CD8-positive, alpha-beta T cell (primary cell): ENCODE measurements at regions of chr15 and their contacts with region 1.

Region 1: DNA sequence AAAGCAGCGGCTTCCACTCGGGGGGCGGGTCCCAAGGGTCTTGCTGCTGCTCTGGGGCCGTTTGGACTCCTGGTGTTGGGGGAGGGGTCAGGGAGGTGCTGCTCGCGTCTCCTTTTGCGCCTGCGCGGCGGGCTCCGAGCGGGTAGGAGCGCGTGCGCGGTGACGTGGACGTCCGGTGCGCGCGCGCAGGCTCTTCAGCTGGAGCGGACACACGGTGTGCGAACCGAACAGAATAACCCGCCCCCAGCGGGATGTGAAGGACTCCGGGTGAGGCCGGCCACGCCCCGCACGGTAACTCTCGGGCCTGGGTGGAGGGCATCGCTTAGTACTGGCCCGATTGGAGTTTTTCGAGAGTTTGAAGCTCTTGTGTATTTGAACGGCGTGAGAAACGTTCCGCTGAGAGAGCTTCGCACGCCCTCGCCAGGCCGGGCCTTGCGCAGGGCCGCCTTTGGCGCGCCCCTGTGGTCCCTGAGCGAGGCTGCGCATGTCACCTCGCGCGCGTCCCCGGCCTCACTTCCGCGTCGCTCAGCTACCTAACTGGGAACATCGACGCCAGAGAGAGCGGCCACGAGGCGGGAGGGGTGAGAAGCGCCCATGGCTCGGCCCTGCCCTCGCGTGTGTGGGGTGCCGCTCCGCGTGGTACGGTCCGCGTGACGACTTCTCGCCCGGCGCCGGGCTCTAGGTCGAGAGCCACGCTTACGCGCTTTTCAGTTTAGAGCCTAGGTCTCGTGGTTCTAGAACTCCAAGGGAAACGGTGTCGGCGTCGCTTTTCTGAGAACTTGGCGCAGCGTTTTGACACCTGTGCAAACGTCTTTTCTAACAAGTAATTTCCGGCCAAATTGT is at the start of gene MGA:
- DNase-seq: peak; percentile 74 to 95 (median 89)
- ATAC-seq: peak; percentile 79
- H3K4me3 ChIP-seq: peak within 1 kb of the TSS; percentile 56 to 62
- H3K4me3 Mint-ChIP-seq: peak within 1 kb of the TSS; percentile 86
- H3K27ac ChIP-seq: peak within 1 kb of the TSS; percentile 90 to 98
- H3K27ac Mint-ChIP-seq: peak within 1 kb of the TSS; percentile 89
- H3K4me1 ChIP-seq: peaks cover 31% of the 10 kb centered on the region
- H3K4me1 Mint-ChIP-seq: peaks cover 54% of the 10 kb centered on the region
- H3K27me3 ChIP-seq: peaks cover 0 to 3% of the 10 kb centered on the region in 2 experiments
- H3K27me3 Mint-ChIP-seq: no peaks in the 10 kb centered on the region
- CTCF ChIP-seq: no peak
- total RNA-seq, gene MGA: 32.9 to 35.7 TPM

Region 2: GRCh38 chr15:41230650-41231533 is 429.6 kb before region 1 on chr15 and contains the starts of genes CHP1 and EXD1:
- CTCF ChIA-PET with region 1: no interaction called
- POLR2A ChIA-PET with region 1: no interaction called
- intact Hi-C with region 1: loop called in 1 of 2 experiments (anchors 2 kb)
- DNase-seq: peak; percentile 89 to 97 (median 94)
- ATAC-seq: peak; percentile 95
- H3K4me3 ChIP-seq: peak within 1 kb of the TSS; percentile 83 to 89
- H3K4me3 Mint-ChIP-seq: peak within 1 kb of the TSS; percentile 89
- H3K27ac ChIP-seq: peak within 1 kb of the TSS; percentile 74 to 85
- H3K27ac Mint-ChIP-seq: peak within 1 kb of the TSS; percentile 90
- H3K4me1 ChIP-seq: peaks cover 27% of the 10 kb centered on the region
- H3K4me1 Mint-ChIP-seq: peaks cover 37% of the 10 kb centered on the region
- H3K27me3 ChIP-seq: no peaks in the 10 kb centered on the region
- H3K27me3 Mint-ChIP-seq: no peaks in the 10 kb centered on the region
- CTCF ChIP-seq: peak; percentile 99
- total RNA-seq, gene CHP1: 25.6 to 28.9 TPM
- total RNA-seq, gene EXD1: not detected

Region 3: GRCh38 chr15:41401904-41402267 is 258.6 kb before region 1 on chr15:
- CTCF ChIA-PET with region 1: no interaction called
- POLR2A ChIA-PET with region 1: no interaction called
- intact Hi-C with region 1: loop called in 1 of 2 experiments (anchors 5 kb)
- DNase-seq: no peak
- ATAC-seq: no peak
- H3K4me3 ChIP-seq: peak overlapping the region; percentile 81 to 95
- H3K4me3 Mint-ChIP-seq: peak overlapping the region; percentile 96
- H3K27ac ChIP-seq: peak overlapping the region; percentile 81 to 84
- H3K27ac Mint-ChIP-seq: peak overlapping the region; percentile 96
- H3K4me1 ChIP-seq: peaks cover 10% of the 10 kb centered on the region
- H3K4me1 Mint-ChIP-seq: peaks cover 23% of the 10 kb centered on the region
- H3K27me3 ChIP-seq: no peaks in the 10 kb centered on the region
- H3K27me3 Mint-ChIP-seq: no peaks in the 10 kb centered on the region
- CTCF ChIP-seq: no peak

Region 4: DNA sequence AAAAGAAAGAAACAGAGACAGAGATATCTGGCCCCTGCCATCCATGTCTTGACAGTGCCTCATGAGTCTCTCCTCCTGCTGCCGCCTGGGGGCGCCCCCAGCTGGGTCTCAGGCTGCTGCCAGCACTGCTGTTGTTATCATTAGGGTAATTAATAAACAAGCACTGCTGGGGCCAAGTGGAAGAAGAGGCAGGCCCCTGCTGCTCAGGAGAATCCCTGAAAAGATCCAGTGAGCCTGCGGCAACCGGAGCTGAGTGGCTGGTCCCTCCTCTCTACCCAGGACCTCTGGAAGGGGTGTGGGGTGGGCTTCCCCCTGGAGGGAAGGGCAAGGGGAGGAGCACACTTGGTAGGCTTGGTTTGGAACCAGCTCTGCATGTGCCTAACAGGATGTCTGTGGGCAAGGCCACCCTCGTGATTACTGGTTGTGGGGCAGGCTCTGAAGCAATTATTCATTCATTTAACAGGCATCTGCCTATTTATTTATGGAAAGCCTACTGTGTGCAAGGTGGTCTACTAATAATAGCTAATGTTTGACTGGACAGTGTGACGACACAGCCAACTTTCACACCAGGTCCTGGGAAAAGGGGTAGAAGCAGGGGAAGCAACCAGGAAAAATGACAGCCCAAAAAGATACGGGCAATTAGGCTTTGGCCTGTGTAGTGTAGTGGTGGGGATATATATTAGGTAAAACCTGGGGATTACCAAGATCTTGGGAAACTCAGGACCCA is 102.6 kb before region 1 on chr15:
- CTCF ChIA-PET with region 1: interaction called, 3 read pairs
- POLR2A ChIA-PET with region 1: interaction called, 4 read pairs
- intact Hi-C with region 1: loop called (anchors 1 kb)
- DNase-seq: peak; percentile 47 to 90 (median 77)
- ATAC-seq: peak; percentile 88
- H3K4me3 ChIP-seq: peak overlapping the region; percentile 4 to 41
- H3K4me3 Mint-ChIP-seq: peak overlapping the region; percentile 86
- H3K27ac ChIP-seq: peak overlapping the region in 1 of 2 experiments; percentile 69
- H3K27ac Mint-ChIP-seq: peak overlapping the region; percentile 84
- H3K4me1 ChIP-seq: peaks cover 19% of the 10 kb centered on the region
- H3K4me1 Mint-ChIP-seq: peaks cover 14% of the 10 kb centered on the region
- H3K27me3 ChIP-seq: peaks cover 6 to 10% of the 10 kb centered on the region in 2 experiments
- H3K27me3 Mint-ChIP-seq: peaks cover 18% of the 10 kb centered on the region
- CTCF ChIP-seq: peak; percentile 88

Region 5: DNA sequence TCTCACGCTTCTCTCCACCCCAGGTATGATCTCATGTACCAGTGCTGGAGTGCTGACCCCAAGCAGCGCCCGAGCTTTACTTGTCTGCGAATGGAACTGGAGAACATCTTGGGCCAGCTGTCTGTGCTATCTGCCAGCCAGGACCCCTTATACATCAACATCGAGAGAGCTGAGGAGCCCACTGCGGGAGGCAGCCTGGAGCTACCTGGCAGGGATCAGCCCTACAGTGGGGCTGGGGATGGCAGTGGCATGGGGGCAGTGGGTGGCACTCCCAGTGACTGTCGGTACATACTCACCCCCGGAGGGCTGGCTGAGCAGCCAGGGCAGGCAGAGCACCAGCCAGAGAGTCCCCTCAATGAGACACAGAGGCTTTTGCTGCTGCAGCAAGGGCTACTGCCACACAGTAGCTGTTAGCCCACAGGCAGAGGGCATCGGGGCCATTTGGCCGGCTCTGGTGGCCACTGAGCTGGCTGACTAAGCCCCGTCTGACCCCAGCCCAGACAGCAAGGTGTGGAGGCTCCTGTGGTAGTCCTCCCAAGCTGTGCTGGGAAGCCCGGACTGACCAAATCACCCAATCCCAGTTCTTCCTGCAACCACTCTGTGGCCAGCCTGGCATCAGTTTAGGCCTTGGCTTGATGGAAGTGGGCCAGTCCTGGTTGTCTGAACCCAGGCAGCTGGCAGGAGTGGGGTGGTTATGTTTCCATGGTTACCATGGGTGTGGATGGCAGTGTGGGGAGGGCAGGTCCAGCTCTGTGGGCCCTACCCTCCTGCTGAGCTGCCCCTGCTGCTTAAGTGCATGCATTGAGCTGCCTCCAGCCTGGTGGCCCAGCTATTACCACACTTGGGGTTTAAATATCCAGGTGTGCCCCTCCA is 82.4 kb before region 1 on chr15:
- CTCF ChIA-PET with region 1: no interaction called
- POLR2A ChIA-PET with region 1: no interaction called
- intact Hi-C with region 1: no loop called
- DNase-seq: no peak
- ATAC-seq: no peak
- H3K4me3 ChIP-seq: no peak overlapping the region
- H3K4me3 Mint-ChIP-seq: no peak overlapping the region
- H3K27ac ChIP-seq: no peak overlapping the region
- H3K27ac Mint-ChIP-seq: no peak overlapping the region
- H3K4me1 ChIP-seq: no peaks in the 10 kb centered on the region
- H3K4me1 Mint-ChIP-seq: no peaks in the 10 kb centered on the region
- H3K27me3 ChIP-seq: no peaks in the 10 kb centered on the region
- H3K27me3 Mint-ChIP-seq: peaks cover 8% of the 10 kb centered on the region
- CTCF ChIP-seq: no peak

Region 6: GRCh38 chr15:41621200-41622193 is 39.0 kb before region 1 on chr15:
- CTCF ChIA-PET with region 1: no interaction called
- POLR2A ChIA-PET with region 1: interaction called, 32 read pairs
- intact Hi-C with region 1: loop called (anchors 1 kb)
- DNase-seq: peak; percentile 47 to 88 (median 77)
- ATAC-seq: peak; percentile 79
- H3K4me3 ChIP-seq: peak overlapping the region; percentile 39 to 52
- H3K4me3 Mint-ChIP-seq: peak overlapping the region; percentile 72
- H3K27ac ChIP-seq: peak overlapping the region; percentile 11 to 54
- H3K27ac Mint-ChIP-seq: peak overlapping the region; percentile 57
- H3K4me1 ChIP-seq: peaks cover 13% of the 10 kb centered on the region
- H3K4me1 Mint-ChIP-seq: peaks cover 17% of the 10 kb centered on the region
- H3K27me3 ChIP-seq: no peaks in the 10 kb centered on the region
- H3K27me3 Mint-ChIP-seq: no peaks in the 10 kb centered on the region
- CTCF ChIP-seq: no peak

Region 7: GRCh38 chr15:41695750-41696426 is 35.4 kb after region 1 on chr15:
- CTCF ChIA-PET with region 1: no interaction called
- POLR2A ChIA-PET with region 1: interaction called, 3 read pairs
- intact Hi-C with region 1: loop called in 1 of 2 experiments (anchors 2 kb)
- DNase-seq: peak; percentile 7 to 78 (median 41)
- ATAC-seq: peak; percentile 96
- H3K4me3 ChIP-seq: no peak overlapping the region
- H3K4me3 Mint-ChIP-seq: peak overlapping the region; percentile 29
- H3K27ac ChIP-seq: peak overlapping the region in 1 of 2 experiments; percentile 44
- H3K27ac Mint-ChIP-seq: peak overlapping the region; percentile 69
- H3K4me1 ChIP-seq: peaks cover 22% of the 10 kb centered on the region
- H3K4me1 Mint-ChIP-seq: peaks cover 54% of the 10 kb centered on the region
- H3K27me3 ChIP-seq: no peaks in the 10 kb centered on the region
- H3K27me3 Mint-ChIP-seq: no peaks in the 10 kb centered on the region
- CTCF ChIP-seq: peak; percentile 41

Region 8: GRCh38 chr15:41972253-41973242 is 312.1 kb after region 1 on chr15 and contains the start of gene EHD4:
- CTCF ChIA-PET with region 1: no interaction called
- POLR2A ChIA-PET with region 1: no interaction called
- intact Hi-C with region 1: loop called (anchors 2 to 10 kb)
- DNase-seq: peak; percentile 85 to 98 (median 94)
- ATAC-seq: peak; percentile 81
- H3K4me3 ChIP-seq: peak within 1 kb of the TSS; percentile 69 to 77
- H3K4me3 Mint-ChIP-seq: peak within 1 kb of the TSS; percentile 97
- H3K27ac ChIP-seq: peak within 1 kb of the TSS; percentile 83 to 86
- H3K27ac Mint-ChIP-seq: peak within 1 kb of the TSS; percentile 97
- H3K4me1 ChIP-seq: peaks cover 21% of the 10 kb centered on the region
- H3K4me1 Mint-ChIP-seq: peaks cover 44% of the 10 kb centered on the region
- H3K27me3 ChIP-seq: peaks cover 0 to 4% of the 10 kb centered on the region in 2 experiments
- H3K27me3 Mint-ChIP-seq: peaks cover 5% of the 10 kb centered on the region
- CTCF ChIP-seq: no peak
- total RNA-seq, gene EHD4: 36.4 to 40.5 TPM